Body of pancreas (tissue), 4 donors: ENCODE measurements at regions of chr14 and their contacts with region 1.

Region 1: DNA sequence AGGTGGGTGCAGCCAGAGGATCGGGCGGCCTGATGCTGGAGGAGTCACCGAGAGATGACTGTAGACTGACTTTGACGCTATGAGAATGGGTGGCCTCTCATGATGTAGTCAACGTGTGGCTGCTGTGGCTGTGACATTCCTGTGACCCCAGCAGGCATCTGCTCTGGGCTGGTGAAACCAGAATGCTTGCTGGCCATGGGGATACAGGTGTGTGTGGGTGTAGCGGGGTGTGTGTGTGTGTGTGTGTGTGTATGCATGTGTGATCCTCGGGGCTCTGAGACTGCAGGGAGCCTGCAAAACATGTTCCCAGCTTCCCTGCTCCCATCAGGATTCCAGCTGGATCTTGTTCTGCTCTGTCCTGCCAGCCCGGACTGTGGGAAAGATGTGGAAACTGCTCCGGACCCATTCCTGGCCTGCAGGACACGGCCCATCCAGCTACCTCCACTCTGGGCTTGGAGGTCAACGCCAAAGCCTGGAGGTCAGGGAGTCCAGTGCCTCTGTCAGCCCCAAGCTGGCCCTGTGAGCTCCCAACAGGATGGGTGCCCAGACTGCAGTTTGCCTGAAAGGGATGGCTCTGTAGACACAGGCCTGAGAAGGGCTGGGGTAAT is 18.8 kb upstream of the HHIPL1 start:
- DNase-seq: no peak
- ATAC-seq: no peak
- H3K4me3 ChIP-seq: no peak overlapping the region
- H3K27ac ChIP-seq: no peak overlapping the region
- H3K4me1 ChIP-seq: peaks cover 8% of the 10 kb centered on the region
- H3K27me3 ChIP-seq: no peaks in the 10 kb centered on the region
- CTCF ChIP-seq: no peak
- POLR2A ChIP-seq: no peak

Region 2: DNA sequence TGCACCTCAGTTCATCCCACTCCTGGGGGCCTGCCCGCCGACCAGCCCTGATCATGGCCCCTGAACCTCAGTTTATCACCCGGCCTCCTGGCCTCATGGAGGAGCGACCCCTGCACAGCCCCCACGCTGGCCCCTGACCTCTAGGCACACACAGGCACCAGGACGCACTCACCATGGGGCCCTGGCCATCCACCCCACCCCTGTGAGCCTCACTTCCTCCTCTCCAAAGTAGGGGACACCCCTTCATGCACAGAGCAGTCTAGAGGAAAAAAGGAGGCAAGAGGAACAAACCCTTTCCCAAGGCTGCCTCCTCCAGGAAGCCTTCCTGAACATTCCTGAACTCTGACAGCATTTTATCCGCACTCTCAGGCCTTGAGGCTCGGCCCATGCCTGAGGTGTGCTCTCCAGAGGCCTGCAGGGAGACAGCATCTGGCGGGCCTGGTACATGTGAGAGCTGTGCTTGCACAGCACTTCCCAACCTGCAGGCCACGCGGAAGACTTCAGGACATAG is 105.5 kb before region 1 on chr14:
- intact Hi-C with region 1: loop called (anchors 2 kb)
- DNase-seq: no peak
- ATAC-seq: no peak
- H3K4me3 ChIP-seq: no peak overlapping the region
- H3K27ac ChIP-seq: no peak overlapping the region
- H3K4me1 ChIP-seq: peaks cover 36% of the 10 kb centered on the region
- H3K27me3 ChIP-seq: no peaks in the 10 kb centered on the region
- CTCF ChIP-seq: no peak
- POLR2A ChIP-seq: no peak